Activated T-helper 1 cell treated with anti-CD3 and anti-CD28 coated beads, Interleukin-12 subunit alpha, Interleukin-12 subunit beta, Interleukin-2, Interleukin-4 antibody, amounts not matched to agents 30 ng/mL and 10 ng/mL and 1 ng/mL, durations not matched to agents 14 hours and 24 hours and 36 hours (primary cell): ENCODE measurements at regions of chr2 and their contacts with region 1.

Region 1: GRCh38 chr2:102753563-102754159 is 8.2 kb upstream of the TMEM182 start:
- DNase-seq: no peak
- H3K4me3 Mint-ChIP-seq: no peak overlapping the region
- H3K27ac Mint-ChIP-seq: no peak overlapping the region
- H3K4me1 Mint-ChIP-seq: no peaks in the 10 kb centered on the region
- H3K27me3 Mint-ChIP-seq: no peaks in the 10 kb centered on the region

Region 2: DNA sequence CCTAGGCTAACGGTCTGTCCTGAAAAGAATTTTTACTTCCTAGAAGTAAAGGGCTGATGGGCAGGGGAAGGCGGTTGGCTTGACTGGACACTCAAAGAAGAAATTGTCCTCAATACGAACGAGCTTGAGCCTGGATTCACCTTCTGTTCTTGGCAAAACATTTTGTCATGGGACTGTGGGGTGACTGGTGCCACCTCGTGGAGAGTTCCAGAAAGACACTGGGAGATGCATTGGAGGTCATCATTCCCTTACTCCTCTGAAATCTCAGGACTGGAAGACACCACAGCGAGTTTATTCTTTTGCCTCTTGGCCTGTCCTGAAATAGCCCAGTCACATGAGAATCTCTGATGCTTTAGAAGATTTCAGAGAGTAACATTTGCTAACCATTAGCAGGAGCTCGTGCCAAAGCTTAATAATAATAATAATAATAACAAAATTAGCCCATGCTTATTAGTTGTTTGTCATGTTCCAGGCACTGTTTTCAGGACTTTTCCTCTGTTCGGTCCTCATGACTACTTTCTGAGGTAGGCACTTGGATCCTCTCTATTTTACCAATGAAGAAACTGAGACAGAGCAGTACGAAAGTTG is 52.7 kb after region 1 on chr2:
- intact Hi-C with region 1: loop called (anchors 1 kb)
- DNase-seq: no peak
- H3K4me3 Mint-ChIP-seq: no peak overlapping the region
- H3K27ac Mint-ChIP-seq: no peak overlapping the region
- H3K4me1 Mint-ChIP-seq: peaks cover 9% of the 10 kb centered on the region
- H3K27me3 Mint-ChIP-seq: peaks cover 2% of the 10 kb centered on the region

Region 3: GRCh38 chr2:102826904-102827303 is 73.2 kb after region 1 on chr2:
- intact Hi-C with region 1: no loop called
- DNase-seq: no peak
- H3K4me3 Mint-ChIP-seq: no peak overlapping the region
- H3K27ac Mint-ChIP-seq: no peak overlapping the region
- H3K4me1 Mint-ChIP-seq: no peaks in the 10 kb centered on the region
- H3K27me3 Mint-ChIP-seq: peaks cover 3% of the 10 kb centered on the region